ENCODE measurements at regions of chrX and their contacts with region 1.

Region 1: DNA sequence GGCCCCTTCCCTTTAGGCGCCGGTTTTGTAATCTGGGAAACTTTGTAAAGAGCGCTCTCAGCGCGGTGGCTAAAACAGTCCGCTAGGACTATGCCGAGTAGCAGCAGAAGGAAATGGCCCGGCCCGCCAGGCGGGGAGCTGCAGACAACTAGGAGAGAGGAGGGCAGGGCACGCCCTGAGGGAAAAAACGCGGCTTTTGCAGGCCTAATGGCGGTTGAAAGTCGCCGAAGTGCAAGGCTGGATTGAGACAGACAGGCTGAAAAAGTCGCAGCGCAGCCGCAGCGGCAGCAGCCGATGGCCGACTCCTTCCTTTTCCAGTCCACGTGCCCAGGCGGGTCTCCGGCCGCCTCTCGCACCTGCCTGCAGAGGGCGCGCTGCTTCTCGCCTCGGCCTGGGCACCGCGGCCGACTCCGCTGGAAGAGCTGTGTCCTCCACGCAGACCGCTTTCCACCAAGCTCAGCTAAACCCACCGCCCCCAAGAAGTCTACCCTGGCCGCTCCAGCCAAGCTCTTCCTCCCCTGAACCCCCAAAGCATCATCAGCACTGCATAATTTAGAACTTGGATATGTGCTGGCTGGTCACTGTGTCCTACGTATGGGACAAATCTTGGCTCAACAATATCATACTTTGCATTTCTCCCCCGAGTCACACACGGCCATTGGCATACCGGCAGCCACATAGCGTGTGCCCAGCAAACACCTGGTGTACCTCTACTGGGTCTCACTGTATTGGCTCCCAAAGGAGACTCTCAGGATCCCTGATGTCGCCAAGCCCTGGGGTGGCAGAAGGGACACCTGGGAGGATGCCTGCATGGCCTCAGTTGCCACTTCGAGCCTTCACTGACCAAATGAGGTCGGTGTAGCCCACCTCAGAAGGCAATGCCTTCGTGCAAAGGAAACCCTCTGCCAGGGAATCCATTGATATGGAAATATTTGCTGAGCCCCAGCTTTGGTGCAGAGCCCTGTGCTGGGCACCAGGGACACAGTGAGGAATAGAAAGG is 14.5 kb downstream of the SLC25A5 start:
- DNase-seq: peak; percentile 44 to 64 (median 54)
- H3K4me3 ChIP-seq: peak overlapping the region; percentile 37
- H3K4me3 Mint-ChIP-seq: peak overlapping the region; percentile 41 to 89 (median 81)
- H3K27ac ChIP-seq: no peak overlapping the region
- H3K27ac Mint-ChIP-seq: peak overlapping the region in 7 of 8 donors; percentile 37 to 80 (median 48)
- H3K4me1 ChIP-seq: peaks cover 4% of the 10 kb centered on the region
- H3K4me1 Mint-ChIP-seq: peaks cover 7 to 10% (median 8%) of the 10 kb centered on the region in 3 donors
- H3K27me3 ChIP-seq: no peaks in the 10 kb centered on the region
- H3K27me3 Mint-ChIP-seq: peaks cover 0 to 1% of the 10 kb centered on the region in 2 donors

Region 2: DNA sequence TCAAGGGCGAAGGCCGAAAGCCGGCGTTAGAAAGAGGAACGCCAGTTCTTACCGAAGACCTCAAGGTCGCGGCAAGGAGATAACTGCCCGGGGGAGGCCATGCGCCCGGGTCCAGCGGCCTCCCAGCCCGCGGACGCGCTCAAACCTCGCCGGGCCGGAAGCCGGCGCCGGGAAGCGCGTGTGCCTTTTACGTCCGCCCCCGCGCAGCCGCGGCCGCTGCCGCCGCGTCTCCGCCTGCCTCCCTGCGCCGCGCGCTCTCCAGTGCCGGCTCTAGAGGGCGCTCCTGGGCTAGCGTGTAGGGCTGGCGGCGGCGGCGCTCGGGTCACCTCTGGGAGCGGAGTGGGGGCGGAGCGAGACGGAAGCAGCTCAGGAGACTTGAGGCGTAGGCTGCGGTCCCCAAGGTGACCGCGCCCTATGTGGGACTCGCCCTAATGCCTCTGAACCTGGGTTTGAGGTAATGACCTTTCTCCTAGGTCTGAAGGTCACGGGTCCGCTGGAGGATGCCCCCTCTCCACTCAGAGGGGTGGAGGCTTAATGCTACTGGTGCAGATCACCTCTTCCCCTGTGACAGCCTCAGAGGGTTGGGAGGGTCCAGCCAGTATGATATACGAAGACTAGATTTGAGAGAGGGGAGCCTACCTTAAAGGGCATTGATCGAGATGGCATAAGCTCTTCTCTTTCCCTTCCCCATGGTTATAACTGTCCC is 13.7 kb before region 1 on chrX:
- CTCF ChIA-PET with region 1: interaction called, 32 read pairs
- POLR2A ChIA-PET with region 1: no interaction called
- DNase-seq: peak; percentile 82 to 90 (median 85)
- H3K4me3 ChIP-seq: peak overlapping the region; percentile 76
- H3K4me3 Mint-ChIP-seq: peak overlapping the region; percentile 85 to 97 (median 88)
- H3K27ac ChIP-seq: peak overlapping the region; percentile 90
- H3K27ac Mint-ChIP-seq: peak overlapping the region; percentile 77 to 97 (median 94)
- H3K4me1 ChIP-seq: peaks cover 10% of the 10 kb centered on the region
- H3K4me1 Mint-ChIP-seq: peaks cover 5 to 22% (median 13%) of the 10 kb centered on the region in 3 donors
- H3K27me3 ChIP-seq: no peaks in the 10 kb centered on the region
- H3K27me3 Mint-ChIP-seq: peaks cover 0 to 4% of the 10 kb centered on the region in 2 donors

Region 3: GRCh38 chrX:119516157-119516702 is 33.4 kb after region 1 on chrX:
- CTCF ChIA-PET with region 1: interaction called, 11 read pairs
- POLR2A ChIA-PET with region 1: no interaction called
- DNase-seq: peak in 4 of 5 donors; percentile 2 to 60 (median 52)
- H3K4me3 ChIP-seq: no peak overlapping the region
- H3K4me3 Mint-ChIP-seq: no peak overlapping the region
- H3K27ac ChIP-seq: no peak overlapping the region
- H3K27ac Mint-ChIP-seq: peak overlapping the region in 3 of 8 donors; percentile 12 to 75 (median 20)
- H3K4me1 ChIP-seq: no peaks in the 10 kb centered on the region
- H3K4me1 Mint-ChIP-seq: peaks cover 2 to 5% (median 4%) of the 10 kb centered on the region in 3 donors
- H3K27me3 ChIP-seq: no peaks in the 10 kb centered on the region
- H3K27me3 Mint-ChIP-seq: peaks cover 0 to 6% of the 10 kb centered on the region in 2 donors